PC-9 (cell line): ENCODE measurements at regions of chr3 and their contacts with region 1.

Region 1: DNA sequence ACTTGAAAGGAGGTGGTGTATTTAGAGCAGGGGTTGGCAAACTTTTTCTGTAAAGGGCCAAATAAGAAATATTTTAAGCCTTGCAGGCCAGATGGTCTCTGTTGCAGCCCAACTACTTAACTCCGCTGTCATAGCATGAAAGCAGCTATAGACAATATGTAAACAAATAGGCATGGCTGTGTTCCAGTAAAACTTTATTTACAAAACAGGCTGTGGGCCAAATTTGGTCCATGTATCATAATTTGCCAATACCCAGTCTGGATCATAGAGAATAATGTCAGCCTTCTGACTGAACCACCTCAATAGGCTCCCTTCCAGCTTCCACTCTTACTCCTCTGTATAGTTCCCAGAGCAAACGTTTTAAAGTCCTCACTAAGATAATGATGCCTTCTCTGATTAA is 638.8 kb upstream of the CFAP20DC start:
- DNase-seq: no peak
- H3K4me3 ChIP-seq: no peak overlapping the region
- H3K27ac ChIP-seq: no peak overlapping the region
- H3K4me1 ChIP-seq: no peaks in the 10 kb centered on the region
- H3K27me3 ChIP-seq: no peaks in the 10 kb centered on the region
- CTCF ChIP-seq: no peak

Region 2: DNA sequence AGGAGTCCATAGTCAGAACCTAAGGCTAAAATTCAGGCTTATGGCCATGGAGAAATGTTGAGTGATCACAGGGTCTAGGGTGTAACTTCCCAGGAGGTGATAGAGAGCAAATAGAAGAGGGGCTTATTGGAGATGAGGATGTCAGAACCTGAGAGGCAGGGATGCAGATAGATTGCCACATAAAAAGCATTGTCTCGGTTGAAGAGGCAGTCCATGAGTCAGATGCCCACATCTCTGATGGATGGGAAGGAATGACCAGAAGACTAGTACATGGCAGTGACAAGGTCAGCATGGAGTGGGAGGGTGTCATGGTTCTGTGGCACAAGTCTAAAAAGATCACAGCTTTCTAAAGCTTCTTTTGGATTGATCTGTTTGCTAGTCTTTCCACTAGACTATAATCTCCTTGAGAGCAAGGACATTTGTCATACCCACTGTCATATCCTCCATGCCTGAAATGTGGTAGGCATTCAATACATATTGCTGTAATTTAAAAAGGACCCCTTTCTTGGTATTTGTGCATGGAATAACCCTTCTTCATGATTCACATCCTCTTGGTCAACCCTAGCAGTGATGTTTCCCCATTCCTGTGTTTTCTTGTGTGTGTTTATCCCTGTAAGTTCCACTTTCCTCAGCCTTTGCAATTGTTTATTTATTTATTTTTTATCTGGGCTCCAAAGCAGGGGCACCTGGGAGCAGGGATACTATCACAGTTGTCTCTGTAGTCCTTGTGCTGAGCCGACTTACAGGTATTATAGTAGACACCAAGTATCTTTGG is 25.4 kb before region 1 on chr3:
- CTCF ChIA-PET with region 1: interaction called, 12 read pairs
- POLR2A ChIA-PET with region 1: no interaction called
- intact Hi-C with region 1: no loop called
- DNase-seq: no peak
- H3K4me3 ChIP-seq: no peak overlapping the region
- H3K27ac ChIP-seq: no peak overlapping the region
- H3K4me1 ChIP-seq: peaks cover 26% of the 10 kb centered on the region
- H3K27me3 ChIP-seq: no peaks in the 10 kb centered on the region
- CTCF ChIP-seq: no peak

Region 3: DNA sequence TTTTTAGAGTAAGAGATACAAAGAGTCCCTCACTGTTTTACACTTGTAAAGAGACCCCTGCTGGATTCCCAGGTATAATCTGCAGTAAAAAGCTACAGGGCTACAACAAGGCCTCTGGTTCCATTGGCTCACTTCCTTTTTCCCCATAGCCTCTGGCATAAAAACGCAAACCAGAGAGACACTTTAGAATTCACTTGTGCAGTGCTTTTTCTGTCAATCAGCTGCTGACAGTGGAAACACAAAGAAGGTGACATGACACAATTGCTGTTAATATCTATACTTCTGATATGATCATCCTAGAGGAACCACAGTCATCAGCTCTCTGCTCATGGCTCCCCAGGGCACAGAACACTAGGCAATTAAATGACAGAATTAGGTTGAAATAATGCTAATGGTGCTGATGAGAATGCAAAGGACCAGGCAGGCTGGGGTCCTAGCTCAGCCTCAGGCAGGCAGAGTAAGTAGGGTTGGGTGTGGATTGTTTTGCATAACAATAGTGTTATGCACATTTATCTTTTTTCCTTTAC is 29.1 kb after region 1 on chr3:
- CTCF ChIA-PET with region 1: no interaction called
- POLR2A ChIA-PET with region 1: no interaction called
- intact Hi-C with region 1: no loop called
- DNase-seq: no peak
- H3K4me3 ChIP-seq: no peak overlapping the region
- H3K27ac ChIP-seq: no peak overlapping the region
- H3K4me1 ChIP-seq: no peaks in the 10 kb centered on the region
- H3K27me3 ChIP-seq: no peaks in the 10 kb centered on the region
- CTCF ChIP-seq: no peak